ENCODE measurements at regions of chr3 and their contacts with region 1.

Region 1: DNA sequence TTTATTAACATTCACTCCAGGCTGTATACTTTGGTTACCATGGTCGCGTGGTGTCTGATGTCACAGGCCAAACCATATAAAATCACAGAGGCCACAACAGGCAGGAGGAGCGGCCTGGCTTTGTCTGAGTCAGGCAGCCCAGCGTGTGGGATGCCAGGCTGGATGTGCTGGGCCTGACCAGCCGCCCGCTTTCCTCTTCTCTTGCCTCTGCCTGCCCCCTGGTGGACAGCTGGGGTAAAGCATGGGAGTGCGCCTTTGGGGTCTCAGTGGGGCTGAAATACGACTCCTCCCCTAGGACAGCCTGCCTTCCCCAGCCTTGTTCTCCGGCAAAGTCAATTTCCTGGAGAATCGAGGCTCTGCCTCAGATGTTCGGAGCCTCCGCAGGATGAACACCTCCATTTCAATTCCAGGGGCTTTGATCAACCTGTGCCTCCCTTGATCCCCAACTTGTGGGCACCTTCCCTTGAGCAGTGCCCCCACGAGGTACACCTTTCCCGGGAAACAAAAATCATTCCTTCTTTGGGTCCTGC is 78.2 kb downstream of the CCNL1 start:
- DNase-seq: peak; percentile 74 to 94 (median 89)
- ATAC-seq: peak; percentile 96
- H3K4me3 ChIP-seq: no peak overlapping the region
- H3K4me3 Mint-ChIP-seq: no peak overlapping the region
- H3K27ac ChIP-seq: peak overlapping the region in 1 of 2 experiments; percentile 17
- H3K27ac Mint-ChIP-seq: peak overlapping the region; percentile 74
- H3K4me1 ChIP-seq: peaks cover 9% of the 10 kb centered on the region
- H3K4me1 Mint-ChIP-seq: peaks cover 11% of the 10 kb centered on the region
- H3K27me3 ChIP-seq: no peaks in the 10 kb centered on the region
- H3K27me3 Mint-ChIP-seq: no peaks in the 10 kb centered on the region
- CTCF ChIP-seq: peak; percentile 90

Region 2: GRCh38 chr3:155859859-155860258 is 1221.9 kb before region 1 on chr3:
- CTCF ChIA-PET with region 1: no interaction called
- POLR2A ChIA-PET with region 1: no interaction called
- intact Hi-C with region 1: loop called in 1 of 2 experiments (anchors 10 kb)
- DNase-seq: peak in 2 of 9 experiments; percentile 33 to 43
- ATAC-seq: no peak
- H3K4me3 ChIP-seq: no peak overlapping the region
- H3K4me3 Mint-ChIP-seq: no peak overlapping the region
- H3K27ac ChIP-seq: no peak overlapping the region
- H3K27ac Mint-ChIP-seq: no peak overlapping the region
- H3K4me1 ChIP-seq: peaks cover 9% of the 10 kb centered on the region
- H3K4me1 Mint-ChIP-seq: peaks cover 13% of the 10 kb centered on the region
- H3K27me3 ChIP-seq: no peaks in the 10 kb centered on the region
- H3K27me3 Mint-ChIP-seq: no peaks in the 10 kb centered on the region
- CTCF ChIP-seq: no peak

Region 3: DNA sequence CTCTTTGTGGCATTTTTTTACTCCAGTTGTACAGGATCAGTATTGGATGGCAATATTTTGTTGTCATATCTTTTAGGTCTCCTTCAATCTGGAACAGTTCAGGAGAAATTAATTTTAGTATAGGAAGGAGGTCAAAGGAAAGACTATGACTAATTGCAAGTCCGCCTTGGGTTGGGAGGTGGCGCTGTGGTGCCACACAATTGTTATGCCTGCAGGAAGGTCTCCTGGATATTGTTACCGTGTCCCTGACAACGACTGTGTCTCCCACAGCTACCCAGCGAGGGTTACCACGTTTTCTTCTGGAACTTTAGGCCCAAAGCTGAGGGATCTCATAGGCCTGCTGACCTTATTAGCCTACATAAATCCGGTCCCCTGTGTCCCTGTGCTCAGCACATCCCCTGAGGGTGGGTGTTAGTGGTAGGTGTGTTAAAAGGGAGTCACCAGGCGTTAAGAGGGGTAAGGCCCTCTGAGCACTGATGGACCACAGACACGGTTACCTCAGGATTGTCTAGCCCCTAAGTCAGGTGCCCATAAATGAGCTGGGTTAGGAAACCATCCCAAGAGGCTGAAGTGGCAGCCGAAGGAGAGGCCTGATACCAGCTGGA is 929.8 kb before region 1 on chr3:
- CTCF ChIA-PET with region 1: interaction called, 4 read pairs
- POLR2A ChIA-PET with region 1: no interaction called
- intact Hi-C with region 1: loop called (anchors 1 to 2 kb)
- DNase-seq: peak in 8 of 9 experiments; percentile 25 to 66 (median 54)
- ATAC-seq: peak; percentile 56
- H3K4me3 ChIP-seq: no peak overlapping the region
- H3K4me3 Mint-ChIP-seq: no peak overlapping the region
- H3K27ac ChIP-seq: no peak overlapping the region
- H3K27ac Mint-ChIP-seq: no peak overlapping the region
- H3K4me1 ChIP-seq: no peaks in the 10 kb centered on the region
- H3K4me1 Mint-ChIP-seq: peaks cover 3% of the 10 kb centered on the region
- H3K27me3 ChIP-seq: no peaks in the 10 kb centered on the region
- H3K27me3 Mint-ChIP-seq: peaks cover 5% of the 10 kb centered on the region
- CTCF ChIP-seq: peak; percentile 73

Region 4: GRCh38 chr3:156519758-156520162 is 562.0 kb before region 1 on chr3:
- CTCF ChIA-PET with region 1: no interaction called
- POLR2A ChIA-PET with region 1: no interaction called
- intact Hi-C with region 1: loop called in 1 of 2 experiments (anchors 10 kb)
- DNase-seq: no peak
- ATAC-seq: no peak
- H3K4me3 ChIP-seq: no peak overlapping the region
- H3K4me3 Mint-ChIP-seq: no peak overlapping the region
- H3K27ac ChIP-seq: no peak overlapping the region
- H3K27ac Mint-ChIP-seq: no peak overlapping the region
- H3K4me1 ChIP-seq: peaks cover 2% of the 10 kb centered on the region
- H3K4me1 Mint-ChIP-seq: peaks cover 4% of the 10 kb centered on the region
- H3K27me3 ChIP-seq: no peaks in the 10 kb centered on the region
- H3K27me3 Mint-ChIP-seq: peaks cover 14% of the 10 kb centered on the region
- CTCF ChIP-seq: no peak

Region 5: GRCh38 chr3:156554842-156555687 is 526.7 kb before region 1 on chr3 and contains the start of gene SSR3:
- CTCF ChIA-PET with region 1: interaction called, 8 read pairs
- POLR2A ChIA-PET with region 1: no interaction called
- intact Hi-C with region 1: loop called in 1 of 2 experiments (anchors 1 kb)
- DNase-seq: peak; percentile 98 to 99 (median 98)
- ATAC-seq: peak; percentile 98
- H3K4me3 ChIP-seq: peak within 1 kb of the TSS; percentile 87 to 98
- H3K4me3 Mint-ChIP-seq: peak within 1 kb of the TSS; percentile 97
- H3K27ac ChIP-seq: peak within 1 kb of the TSS; percentile 76 to 89
- H3K27ac Mint-ChIP-seq: peak within 1 kb of the TSS; percentile 94
- H3K4me1 ChIP-seq: peaks cover 20% of the 10 kb centered on the region
- H3K4me1 Mint-ChIP-seq: peaks cover 49% of the 10 kb centered on the region
- H3K27me3 ChIP-seq: no peaks in the 10 kb centered on the region
- H3K27me3 Mint-ChIP-seq: no peaks in the 10 kb centered on the region
- CTCF ChIP-seq: peak; percentile 27
- total RNA-seq, gene SSR3: 81.4 to 82.5 TPM

Region 6: GRCh38 chr3:156826144-156826895 is 255.4 kb before region 1 on chr3 and contains the start of gene LEKR1:
- CTCF ChIA-PET with region 1: no interaction called
- POLR2A ChIA-PET with region 1: no interaction called
- intact Hi-C with region 1: loop called in 1 of 2 experiments (anchors 2 kb)
- DNase-seq: peak; percentile 28 to 92 (median 67)
- ATAC-seq: peak; percentile 54
- H3K4me3 ChIP-seq: peak within 1 kb of the TSS; percentile 71 to 81
- H3K4me3 Mint-ChIP-seq: peak within 1 kb of the TSS; percentile 89
- H3K27ac ChIP-seq: peak within 1 kb of the TSS; percentile 73 to 92
- H3K27ac Mint-ChIP-seq: peak within 1 kb of the TSS; percentile 95
- H3K4me1 ChIP-seq: peaks cover 9% of the 10 kb centered on the region
- H3K4me1 Mint-ChIP-seq: peaks cover 13% of the 10 kb centered on the region
- H3K27me3 ChIP-seq: no peaks in the 10 kb centered on the region
- H3K27me3 Mint-ChIP-seq: no peaks in the 10 kb centered on the region
- CTCF ChIP-seq: no peak
- total RNA-seq, gene LEKR1: 1.5 to 1.8 TPM

Region 7: DNA sequence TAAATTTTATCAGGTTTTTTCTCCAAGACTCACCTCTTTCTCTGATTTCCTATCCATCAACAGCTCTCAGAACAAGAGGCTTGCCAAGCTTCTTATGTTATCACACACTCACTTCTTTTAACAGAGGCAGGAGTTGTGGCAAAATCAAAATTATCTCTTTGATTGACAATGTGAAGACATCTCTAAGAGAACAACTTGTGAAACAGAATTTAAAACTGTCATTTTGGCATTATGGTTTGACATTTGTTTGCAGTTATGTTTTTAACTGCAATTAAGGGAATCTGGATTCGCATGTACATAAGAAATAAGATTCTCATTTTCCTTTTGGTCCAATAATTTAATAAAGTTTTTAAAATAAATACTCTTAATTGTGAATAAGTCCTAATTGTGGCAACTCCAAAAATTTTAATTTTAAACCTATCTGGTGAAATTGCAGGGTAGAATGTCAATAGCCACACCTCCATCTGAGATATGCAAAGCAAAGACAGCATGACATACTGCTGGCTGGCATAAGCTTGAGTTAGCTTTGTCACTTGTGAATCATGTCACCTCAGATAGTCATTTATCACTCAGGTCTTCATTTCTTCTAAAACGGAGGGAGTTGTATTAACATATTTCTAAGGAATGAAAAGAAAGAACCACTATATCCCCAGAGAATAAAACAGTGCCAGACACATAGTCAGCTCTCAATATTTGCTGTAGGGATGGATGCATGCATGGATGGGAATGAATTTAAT is 80.4 kb before region 1 on chr3:
- CTCF ChIA-PET with region 1: no interaction called
- POLR2A ChIA-PET with region 1: no interaction called
- intact Hi-C with region 1: no loop called
- DNase-seq: no peak
- ATAC-seq: no peak
- H3K4me3 ChIP-seq: no peak overlapping the region
- H3K4me3 Mint-ChIP-seq: no peak overlapping the region
- H3K27ac ChIP-seq: no peak overlapping the region
- H3K27ac Mint-ChIP-seq: no peak overlapping the region
- H3K4me1 ChIP-seq: no peaks in the 10 kb centered on the region
- H3K4me1 Mint-ChIP-seq: no peaks in the 10 kb centered on the region
- H3K27me3 ChIP-seq: peaks cover 0 to 4% of the 10 kb centered on the region in 2 experiments
- H3K27me3 Mint-ChIP-seq: peaks cover 8% of the 10 kb centered on the region
- CTCF ChIP-seq: no peak

Region 8: GRCh38 chr3:157130467-157131251 is 48.9 kb after region 1 on chr3:
- CTCF ChIA-PET with region 1: interaction called, 20 read pairs
- POLR2A ChIA-PET with region 1: interaction called, 3 read pairs
- intact Hi-C with region 1: no loop called
- DNase-seq: peak; percentile 44 to 93 (median 85)
- ATAC-seq: peak; percentile 69
- H3K4me3 ChIP-seq: peak overlapping the region; percentile 14 to 24
- H3K4me3 Mint-ChIP-seq: peak overlapping the region; percentile 72
- H3K27ac ChIP-seq: peak overlapping the region; percentile 71 to 90
- H3K27ac Mint-ChIP-seq: peak overlapping the region; percentile 99
- H3K4me1 ChIP-seq: peaks cover 50% of the 10 kb centered on the region
- H3K4me1 Mint-ChIP-seq: peaks cover 71% of the 10 kb centered on the region
- H3K27me3 ChIP-seq: no peaks in the 10 kb centered on the region
- H3K27me3 Mint-ChIP-seq: no peaks in the 10 kb centered on the region
- CTCF ChIP-seq: peak; percentile 84